ENCODE measurements at regions of chr3 and their contacts with region 1.

Region 1: DNA sequence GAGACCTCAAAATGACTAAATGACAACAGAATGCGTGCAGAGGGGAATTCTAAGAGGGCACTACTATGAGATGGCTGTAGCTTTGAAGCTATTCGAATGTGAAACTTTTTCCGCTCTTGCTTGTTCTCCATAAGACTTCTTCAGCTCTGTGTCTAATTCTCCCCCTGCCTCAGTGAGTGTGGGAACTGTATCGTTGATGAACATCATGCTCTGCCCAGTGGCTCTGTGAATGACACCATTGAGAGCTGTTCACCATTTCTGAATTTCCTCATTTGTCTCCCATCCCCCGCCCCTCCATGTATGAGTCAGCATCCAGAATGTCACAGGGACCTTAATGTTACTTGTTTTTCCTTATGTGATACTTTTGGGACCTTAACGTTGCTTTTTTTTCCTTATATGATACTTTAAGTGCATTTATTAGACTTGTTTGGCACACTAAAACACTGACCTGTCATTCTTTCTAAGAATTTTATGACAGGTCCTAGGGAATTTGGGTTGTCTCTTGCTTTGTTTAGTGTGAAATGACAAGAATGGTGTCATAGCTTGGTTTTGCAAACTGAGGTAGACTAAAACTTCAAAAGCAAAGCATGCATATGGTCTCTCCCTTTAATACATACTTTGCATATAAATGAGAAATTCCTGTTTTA is 99.5 kb downstream of the FNDC3B start:
- DNase-seq: peak; percentile 78
- H3K4me3 ChIP-seq: no peak overlapping the region
- H3K27ac ChIP-seq: peak overlapping the region; percentile 99
- H3K4me1 ChIP-seq: peaks cover 90% of the 10 kb centered on the region
- H3K27me3 ChIP-seq: no peaks in the 10 kb centered on the region
- CTCF ChIP-seq: no peak
- POLR2A ChIP-seq: peak; percentile 41

Region 2: GRCh38 chr3:171801738-171802600 is 336.9 kb before region 1 on chr3:
- CTCF ChIA-PET with region 1: no interaction called
- POLR2A ChIA-PET with region 1: no interaction called
- dilution Hi-C with region 1: no loop called
- intact Hi-C with region 1: loop called (anchors 2 kb)
- DNase-seq: peak; percentile 97
- H3K4me3 ChIP-seq: no peak overlapping the region
- H3K27ac ChIP-seq: peak overlapping the region; percentile 97
- H3K4me1 ChIP-seq: peaks cover 86% of the 10 kb centered on the region
- H3K27me3 ChIP-seq: no peaks in the 10 kb centered on the region
- CTCF ChIP-seq: no peak
- POLR2A ChIP-seq: peak; percentile 40

Region 3: GRCh38 chr3:171874251-171874679 is 264.7 kb before region 1 on chr3:
- CTCF ChIA-PET with region 1: no interaction called
- POLR2A ChIA-PET with region 1: no interaction called
- dilution Hi-C with region 1: no loop called
- intact Hi-C with region 1: loop called (anchors 1 kb)
- DNase-seq: peak; percentile 98
- H3K4me3 ChIP-seq: no peak overlapping the region
- H3K27ac ChIP-seq: peak overlapping the region; percentile 97
- H3K4me1 ChIP-seq: peaks cover 53% of the 10 kb centered on the region
- H3K27me3 ChIP-seq: no peaks in the 10 kb centered on the region
- CTCF ChIP-seq: no peak
- POLR2A ChIP-seq: peak; percentile 76

Region 4: GRCh38 chr3:172061724-172062184 is 77.2 kb before region 1 on chr3:
- CTCF ChIA-PET with region 1: no interaction called
- POLR2A ChIA-PET with region 1: no interaction called
- dilution Hi-C with region 1: no loop called
- intact Hi-C with region 1: loop called (anchors 2 kb)
- DNase-seq: peak; percentile 69
- H3K4me3 ChIP-seq: peak overlapping the region in 1 of 3 experiments; percentile 3
- H3K27ac ChIP-seq: peak overlapping the region; percentile 38
- H3K4me1 ChIP-seq: peaks cover 80% of the 10 kb centered on the region
- H3K27me3 ChIP-seq: no peaks in the 10 kb centered on the region
- CTCF ChIP-seq: no peak
- POLR2A ChIP-seq: peak; percentile 8

Region 5: GRCh38 chr3:172171396-172172075 is 32.6 kb after region 1 on chr3:
- CTCF ChIA-PET with region 1: interaction called, 3 read pairs
- POLR2A ChIA-PET with region 1: no interaction called
- dilution Hi-C with region 1: no loop called
- intact Hi-C with region 1: loop called (anchors 1 kb)
- DNase-seq: no peak
- H3K4me3 ChIP-seq: no peak overlapping the region
- H3K27ac ChIP-seq: no peak overlapping the region
- H3K4me1 ChIP-seq: peaks cover 50% of the 10 kb centered on the region
- H3K27me3 ChIP-seq: no peaks in the 10 kb centered on the region
- CTCF ChIP-seq: no peak
- POLR2A ChIP-seq: no peak

Region 6: DNA sequence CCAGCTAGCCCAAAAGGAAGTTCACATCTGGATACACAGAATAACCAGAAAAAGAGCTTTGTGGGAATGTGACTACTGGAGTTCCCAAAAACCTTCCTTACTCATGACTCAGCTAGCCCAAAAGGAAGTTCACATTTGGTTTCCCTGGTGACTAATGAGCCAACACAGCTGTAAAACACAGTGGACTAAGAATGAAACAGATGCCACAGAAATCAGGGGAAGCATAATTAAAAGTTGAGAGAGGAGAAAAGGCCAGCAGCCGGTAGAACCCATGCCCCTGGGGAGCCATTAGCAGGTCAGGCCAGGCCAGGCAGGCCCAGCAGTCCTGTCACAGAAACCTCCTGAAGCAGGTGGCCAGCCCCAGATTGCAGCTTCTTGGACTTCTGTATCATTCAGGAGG is 179.1 kb after region 1 on chr3:
- CTCF ChIA-PET with region 1: interaction called, 3 read pairs
- POLR2A ChIA-PET with region 1: no interaction called
- dilution Hi-C with region 1: no loop called
- intact Hi-C with region 1: loop called (anchors 5 kb)
- DNase-seq: peak; percentile 94
- H3K4me3 ChIP-seq: no peak overlapping the region
- H3K27ac ChIP-seq: peak overlapping the region; percentile 96
- H3K4me1 ChIP-seq: peaks cover 32% of the 10 kb centered on the region
- H3K27me3 ChIP-seq: no peaks in the 10 kb centered on the region
- CTCF ChIP-seq: no peak
- POLR2A ChIP-seq: no peak

Measured in endothelial cell of umbilical vein (primary cell).